ENCODE measurements at regions of chr2 and their contacts with region 1.

Region 1: GRCh38 chr2:141611-142010 is 95.3 kb upstream of the FAM110C start:
- DNase-seq: no peak
- ATAC-seq: no peak
- H3K4me3 ChIP-seq: no peak overlapping the region
- H3K27ac ChIP-seq: no peak overlapping the region
- H3K4me1 ChIP-seq: no peaks in the 10 kb centered on the region
- H3K27me3 ChIP-seq: peaks cover 0 to 42% of the 10 kb centered on the region in 2 experiments
- CTCF ChIP-seq: no peak
- EP300 ChIP-seq: no peak
- POLR2A ChIP-seq: no peak
- RAD21 ChIP-seq: no peak

Region 2: DNA sequence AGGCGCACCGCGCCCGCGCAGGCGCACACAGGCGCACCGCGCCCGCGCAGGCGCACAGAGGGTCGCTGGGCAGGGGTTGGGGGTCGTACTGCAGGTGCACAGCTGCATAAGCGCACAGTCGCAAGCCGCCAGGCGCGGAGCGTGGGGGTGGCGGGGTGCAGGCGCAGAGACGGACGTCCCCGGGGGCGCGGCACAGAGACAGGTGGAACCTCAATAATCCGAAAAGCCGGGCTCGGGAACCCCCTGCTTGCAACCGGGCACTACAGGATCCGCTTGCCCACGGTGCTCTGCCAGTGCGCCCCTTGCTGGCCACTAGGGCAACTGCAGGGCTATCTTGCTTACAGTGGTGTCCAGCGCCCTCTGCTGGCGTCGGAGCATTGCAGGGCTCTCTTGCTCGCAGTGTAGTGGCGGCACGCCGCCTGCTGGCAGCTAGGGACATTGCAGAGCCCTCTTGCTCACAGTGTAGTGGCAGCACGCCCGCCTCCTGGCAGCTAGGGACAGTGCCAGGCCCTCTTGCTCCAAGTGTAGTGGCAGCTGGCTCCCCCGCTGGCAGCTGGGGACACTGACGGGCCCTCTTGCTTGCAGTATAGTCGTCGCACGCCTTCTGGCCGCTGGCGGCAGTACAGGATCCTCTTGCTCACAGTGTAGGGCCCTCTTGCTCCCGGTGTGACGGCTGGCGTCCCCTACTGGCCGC is 130.2 kb before region 1 on chr2:
- CTCF ChIA-PET with region 1: interaction called, 12 read pairs
- POLR2A ChIA-PET with region 1: no interaction called
- in situ Hi-C with region 1: no loop called
- intact Hi-C with region 1: no loop called
- DNase-seq: peak; percentile 78
- ATAC-seq: peak; percentile 90
- H3K4me3 ChIP-seq: no peak overlapping the region
- H3K27ac ChIP-seq: no peak overlapping the region
- H3K4me1 ChIP-seq: no peaks in the 10 kb centered on the region
- H3K27me3 ChIP-seq: no peaks in the 10 kb centered on the region
- CTCF ChIP-seq: peak; percentile 93
- EP300 ChIP-seq: no peak
- POLR2A ChIP-seq: no peak
- RAD21 ChIP-seq: peak; percentile 75

Region 3: GRCh38 chr2:18402-19271 is 123.0 kb before region 1 on chr2:
- CTCF ChIA-PET with region 1: interaction called, 22 read pairs
- POLR2A ChIA-PET with region 1: no interaction called
- in situ Hi-C with region 1: no loop called
- intact Hi-C with region 1: no loop called
- DNase-seq: no peak
- ATAC-seq: peak; percentile 76
- H3K4me3 ChIP-seq: no peak overlapping the region
- H3K27ac ChIP-seq: no peak overlapping the region
- H3K4me1 ChIP-seq: no peaks in the 10 kb centered on the region
- H3K27me3 ChIP-seq: peaks cover 2 to 9% of the 10 kb centered on the region in 2 experiments; a peak in 1 of 5 replicates
- CTCF ChIP-seq: peak; percentile 55
- EP300 ChIP-seq: no peak
- POLR2A ChIP-seq: no peak
- RAD21 ChIP-seq: peak; percentile 33; the same call in 1 of the 2 replicates

Region 4: GRCh38 chr2:115303-115702 is 26.3 kb before region 1 on chr2:
- CTCF ChIA-PET with region 1: no interaction called
- POLR2A ChIA-PET with region 1: no interaction called
- in situ Hi-C with region 1: no loop called
- intact Hi-C with region 1: no loop called
- DNase-seq: peak; percentile 28
- ATAC-seq: peak; percentile 62
- H3K4me3 ChIP-seq: no peak overlapping the region
- H3K27ac ChIP-seq: no peak overlapping the region
- H3K4me1 ChIP-seq: no peaks in the 10 kb centered on the region
- H3K27me3 ChIP-seq: peaks cover 0 to 10% of the 10 kb centered on the region in 2 experiments; a peak in 2 of 5 replicates
- CTCF ChIP-seq: peak; percentile 28
- EP300 ChIP-seq: no peak
- POLR2A ChIP-seq: no peak
- RAD21 ChIP-seq: no peak

Region 5: GRCh38 chr2:151553-152334 is 10.1 kb after region 1 on chr2:
- CTCF ChIA-PET with region 1: no interaction called
- POLR2A ChIA-PET with region 1: no interaction called
- in situ Hi-C with region 1: no loop called
- intact Hi-C with region 1: no loop called
- DNase-seq: no peak
- ATAC-seq: no peak
- H3K4me3 ChIP-seq: no peak overlapping the region
- H3K27ac ChIP-seq: no peak overlapping the region
- H3K4me1 ChIP-seq: no peaks in the 10 kb centered on the region
- H3K27me3 ChIP-seq: 0 out of 5 replicates have a peak, but pooled peaks cover 0 to 7% of the 10 kb centered on the region in 2 experiments
- CTCF ChIP-seq: no peak
- EP300 ChIP-seq: no peak
- POLR2A ChIP-seq: no peak
- RAD21 ChIP-seq: no peak

Region 6: DNA sequence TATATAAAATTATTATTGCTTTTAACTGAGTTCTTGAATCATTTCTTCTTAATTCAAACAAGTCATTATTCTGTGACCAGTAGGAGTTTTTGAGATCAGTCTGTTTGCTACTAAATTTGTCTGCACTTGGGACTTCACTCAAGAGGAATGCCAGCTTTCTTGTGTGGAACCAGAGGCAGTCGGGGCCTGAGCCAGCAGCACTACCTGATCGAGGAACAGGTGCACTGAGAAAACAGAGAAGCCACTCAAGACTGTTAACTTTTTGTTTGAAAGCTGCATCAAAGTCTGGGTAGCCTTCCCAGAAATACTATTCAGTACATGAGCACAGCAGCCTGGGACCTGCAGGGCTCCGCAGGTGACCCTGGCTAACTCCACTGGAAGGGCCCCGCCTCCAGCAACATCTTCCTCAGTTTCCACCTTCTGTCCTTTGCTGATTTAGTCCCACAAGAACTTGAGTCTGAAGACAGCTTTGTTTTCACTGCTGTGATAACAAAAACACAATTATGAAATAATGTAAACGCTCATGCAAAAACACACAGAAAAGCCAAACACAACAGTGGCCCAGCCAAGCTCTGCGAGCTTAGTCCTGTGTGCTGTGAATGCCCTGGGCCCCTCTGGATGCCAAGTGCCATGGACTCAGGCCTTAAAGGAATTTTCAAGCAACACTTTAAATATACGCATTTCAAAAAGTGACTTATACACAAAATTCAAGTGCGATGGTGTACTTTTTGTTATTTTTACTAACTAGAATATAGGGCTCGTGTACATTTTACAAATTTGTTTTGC is 60.2 kb after region 1 on chr2:
- CTCF ChIA-PET with region 1: no interaction called
- POLR2A ChIA-PET with region 1: no interaction called
- in situ Hi-C with region 1: no loop called
- intact Hi-C with region 1: no loop called
- DNase-seq: no peak
- ATAC-seq: no peak
- H3K4me3 ChIP-seq: no peak overlapping the region
- H3K27ac ChIP-seq: no peak overlapping the region
- H3K4me1 ChIP-seq: peaks cover under 1% of the 10 kb centered on the region; the same call in 1 of the 2 replicates
- H3K27me3 ChIP-seq: peaks cover 5 to 42% of the 10 kb centered on the region in 2 experiments
- CTCF ChIP-seq: no peak
- EP300 ChIP-seq: no peak
- POLR2A ChIP-seq: no peak
- RAD21 ChIP-seq: no peak

Region 7: GRCh38 chr2:1010415-1010930 is 868.9 kb after region 1 on chr2:
- CTCF ChIA-PET with region 1: no interaction called
- POLR2A ChIA-PET with region 1: no interaction called
- in situ Hi-C with region 1: no loop called
- intact Hi-C with region 1: no loop called
- DNase-seq: no peak
- ATAC-seq: no peak
- H3K4me3 ChIP-seq: no peak overlapping the region
- H3K27ac ChIP-seq: no peak overlapping the region
- H3K4me1 ChIP-seq: no peaks in the 10 kb centered on the region
- H3K27me3 ChIP-seq: peaks cover 0 to 8% of the 10 kb centered on the region in 2 experiments; a peak in 1 of 5 replicates
- CTCF ChIP-seq: no peak
- EP300 ChIP-seq: no peak
- POLR2A ChIP-seq: no peak
- RAD21 ChIP-seq: no peak

Measured in HepG2 (cell line).